Adrenal gland (tissue), 19 donors: ENCODE measurements at regions of chr17 and their contacts with region 1.

Region 1: GRCh38 chr17:9676742-9677387 is 31.5 kb downstream of the USP43 start:
- DNase-seq: no peak
- H3K4me3 ChIP-seq: no peak overlapping the region
- H3K27ac ChIP-seq: no peak overlapping the region
- H3K4me1 ChIP-seq: no peaks in the 10 kb centered on the region
- H3K27me3 ChIP-seq: no peaks in the 10 kb centered on the region
- CTCF ChIP-seq: no peak
- POLR2A ChIP-seq: no peak

Region 2: GRCh38 chr17:9465210-9465921 is 211.5 kb before region 1 on chr17:
- intact Hi-C with region 1: no loop called
- DNase-seq: no peak
- H3K4me3 ChIP-seq: no peak overlapping the region
- H3K27ac ChIP-seq: no peak overlapping the region
- H3K4me1 ChIP-seq: no peaks in the 10 kb centered on the region
- H3K27me3 ChIP-seq: no peaks in the 10 kb centered on the region
- CTCF ChIP-seq: no peak
- POLR2A ChIP-seq: no peak

Region 3: DNA sequence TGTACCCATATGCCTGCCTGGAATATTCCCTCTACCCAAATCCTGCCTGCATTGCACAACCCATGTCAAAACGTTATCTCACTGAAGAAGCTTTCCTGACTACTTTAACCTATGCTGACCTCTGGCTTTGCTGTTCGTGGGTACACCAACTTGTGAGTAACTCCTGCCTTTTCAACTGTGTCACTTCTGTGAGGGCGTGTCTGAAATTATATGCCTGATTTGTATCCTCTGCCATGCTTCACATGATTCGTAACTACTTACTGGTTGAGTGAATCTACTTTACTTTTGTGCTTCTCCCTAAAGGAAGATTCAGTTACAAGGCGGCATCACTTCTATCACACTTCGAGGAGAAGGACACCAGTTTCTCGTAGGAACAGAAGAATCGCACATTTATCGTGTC is 64.9 kb before region 1 on chr17:
- intact Hi-C with region 1: no loop called
- DNase-seq: no peak
- H3K4me3 ChIP-seq: no peak overlapping the region
- H3K27ac ChIP-seq: no peak overlapping the region
- H3K4me1 ChIP-seq: no peaks in the 10 kb centered on the region
- H3K27me3 ChIP-seq: no peaks in the 10 kb centered on the region
- CTCF ChIP-seq: no peak
- POLR2A ChIP-seq: no peak

Region 4: GRCh38 chr17:9729735-9730420 is 53.0 kb after region 1 on chr17:
- intact Hi-C with region 1: loop called in 1 of 2 experiments (anchors 10 kb)
- DNase-seq: no peak
- H3K4me3 ChIP-seq: no peak overlapping the region
- H3K27ac ChIP-seq: no peak overlapping the region
- H3K4me1 ChIP-seq: no peaks in the 10 kb centered on the region
- H3K27me3 ChIP-seq: no peaks in the 10 kb centered on the region
- CTCF ChIP-seq: no peak
- POLR2A ChIP-seq: no peak